MCF 10A (cell line): ENCODE measurements at regions of chr4 and their contacts with region 1.

Region 1: GRCh38 chr4:35934320-35934981 is 309.9 kb downstream of the ARAP2 start:
- DNase-seq: peak; percentile 48
- H3K4me3 Mint-ChIP-seq: no peak overlapping the region
- H3K27ac Mint-ChIP-seq: no peak overlapping the region
- H3K4me1 Mint-ChIP-seq: no peaks in the 10 kb centered on the region
- H3K27me3 Mint-ChIP-seq: no peaks in the 10 kb centered on the region
- CTCF ChIP-seq: peak; percentile 58

Region 2: DNA sequence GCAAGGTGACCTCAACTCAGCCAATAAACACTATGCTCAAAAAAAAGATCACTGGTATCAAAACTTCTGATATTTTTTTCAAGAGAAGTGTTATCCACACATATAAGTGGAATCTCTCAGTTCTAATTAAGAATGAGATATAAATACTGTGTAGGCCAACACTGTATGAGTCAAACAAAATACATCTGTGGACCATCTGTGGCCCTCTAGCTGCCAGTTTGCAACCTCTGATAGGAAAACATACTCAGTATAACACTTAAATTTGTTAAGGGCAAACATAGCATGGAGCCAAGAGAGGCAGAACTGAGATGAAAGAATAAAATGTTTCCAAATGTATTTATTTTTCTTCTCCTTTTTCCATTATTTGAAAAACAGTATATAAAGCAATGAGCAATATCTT is 67.4 kb before region 1 on chr4:
- CTCF ChIA-PET with region 1: no interaction called
- POLR2A ChIA-PET with region 1: no interaction called
- intact Hi-C with region 1: no loop called
- DNase-seq: peak; percentile 9
- H3K4me3 Mint-ChIP-seq: no peak overlapping the region
- H3K27ac Mint-ChIP-seq: no peak overlapping the region
- H3K4me1 Mint-ChIP-seq: no peaks in the 10 kb centered on the region
- H3K27me3 Mint-ChIP-seq: no peaks in the 10 kb centered on the region
- CTCF ChIP-seq: no peak

Region 3: DNA sequence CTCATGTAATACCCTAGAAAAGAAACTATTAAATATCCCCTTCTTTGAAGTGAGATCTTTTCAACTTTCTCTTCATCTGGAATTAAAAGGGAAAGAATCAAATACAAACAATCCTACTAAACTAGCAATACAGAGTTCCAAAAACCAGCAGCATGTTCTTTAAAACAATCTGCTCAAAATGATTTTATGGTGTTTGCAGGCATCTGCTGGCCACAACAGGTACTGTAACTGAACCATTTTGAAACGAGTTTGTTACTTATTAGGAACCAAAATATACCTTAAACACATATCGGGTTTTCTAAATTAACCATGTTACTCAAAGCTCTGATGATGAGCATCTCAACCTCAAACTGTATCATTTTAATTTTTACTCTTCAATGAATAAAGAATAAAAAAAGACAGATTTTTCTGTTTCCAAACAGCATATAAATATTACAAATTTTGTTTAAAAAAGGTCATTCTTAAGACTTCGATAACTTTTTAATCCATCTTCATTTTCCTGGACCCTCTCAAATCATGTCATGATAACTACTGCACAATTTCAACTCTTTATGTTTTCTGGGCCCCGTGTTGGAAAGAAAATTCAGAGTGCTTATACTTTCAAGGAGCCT is 253.4 kb after region 1 on chr4:
- CTCF ChIA-PET with region 1: no interaction called
- POLR2A ChIA-PET with region 1: no interaction called
- intact Hi-C with region 1: loop called (anchors 5 kb)
- DNase-seq: peak; percentile 42
- H3K4me3 Mint-ChIP-seq: no peak overlapping the region
- H3K27ac Mint-ChIP-seq: no peak overlapping the region
- H3K4me1 Mint-ChIP-seq: no peaks in the 10 kb centered on the region
- H3K27me3 Mint-ChIP-seq: no peaks in the 10 kb centered on the region
- CTCF ChIP-seq: peak; percentile 91

Region 4: DNA sequence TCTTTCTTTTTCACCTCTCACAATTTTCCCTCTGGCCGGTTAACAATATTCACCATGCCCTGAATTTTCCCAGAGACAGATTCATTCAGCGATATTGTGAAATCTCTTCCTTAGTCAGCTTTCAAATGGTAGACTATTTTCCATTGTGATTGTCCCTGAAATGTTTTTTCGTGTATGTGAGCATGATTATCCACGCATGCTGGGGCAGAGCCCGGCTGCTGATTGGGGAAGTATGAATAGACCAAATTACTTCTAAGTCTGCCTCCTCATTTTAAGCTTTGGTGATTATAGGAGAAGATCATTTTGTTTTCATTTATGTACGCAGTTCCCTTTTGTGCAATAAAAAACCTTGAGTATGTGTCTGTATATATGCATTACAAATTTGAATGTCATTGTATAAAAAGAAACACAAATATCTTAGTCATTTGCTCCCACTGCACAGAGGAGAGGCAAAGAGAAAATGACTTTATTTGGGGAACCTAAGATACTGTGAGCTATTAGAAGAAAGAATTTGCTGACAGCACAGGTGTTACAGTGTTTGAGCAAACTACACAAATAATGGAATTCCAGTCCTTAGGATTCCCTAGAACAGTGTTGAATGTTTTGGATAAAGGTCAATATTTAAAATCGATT is 358.2 kb after region 1 on chr4:
- CTCF ChIA-PET with region 1: no interaction called
- POLR2A ChIA-PET with region 1: no interaction called
- intact Hi-C with region 1: no loop called
- DNase-seq: peak; percentile 67
- H3K4me3 Mint-ChIP-seq: peak overlapping the region; percentile 30
- H3K27ac Mint-ChIP-seq: peak overlapping the region; percentile 24
- H3K4me1 Mint-ChIP-seq: peaks cover 11% of the 10 kb centered on the region
- H3K27me3 Mint-ChIP-seq: no peaks in the 10 kb centered on the region
- CTCF ChIP-seq: no peak